B cell (primary cell): ENCODE measurements at regions of chr10 and their contacts with region 1.

Region 1: GRCh38 chr10:79938728-79939406 is 10.0 kb downstream of the SFTPD start:
- DNase-seq: peak; percentile 91
- ATAC-seq: peak; percentile 81
- H3K4me3 ChIP-seq: peak overlapping the region in 1 of 5 experiments; percentile 29
- H3K4me3 Mint-ChIP-seq: peak overlapping the region; percentile 80
- H3K27ac ChIP-seq: peak overlapping the region; percentile 78 to 88
- H3K27ac Mint-ChIP-seq: peak overlapping the region; percentile 97
- H3K4me1 ChIP-seq: peaks cover 42 to 45% of the 10 kb centered on the region in 2 donors
- H3K4me1 Mint-ChIP-seq: peaks cover 55% of the 10 kb centered on the region
- H3K27me3 ChIP-seq: no peaks in the 10 kb centered on the region
- H3K27me3 Mint-ChIP-seq: peaks cover 5% of the 10 kb centered on the region
- CTCF ChIP-seq: no peak

Region 2: GRCh38 chr10:79981450-79982361 is 42.8 kb after region 1 on chr10:
- CTCF ChIA-PET with region 1: no interaction called
- POLR2A ChIA-PET with region 1: no interaction called
- intact Hi-C with region 1: loop called (anchors 2 kb)
- DNase-seq: peak; percentile 40
- ATAC-seq: peak; percentile 62
- H3K4me3 ChIP-seq: peak overlapping the region in 4 of 5 experiments; percentile 32 to 59 (median 54)
- H3K4me3 Mint-ChIP-seq: peak overlapping the region; percentile 75
- H3K27ac ChIP-seq: no peak overlapping the region
- H3K27ac Mint-ChIP-seq: no peak overlapping the region
- H3K4me1 ChIP-seq: peaks cover 9 to 10% of the 10 kb centered on the region in 2 donors
- H3K4me1 Mint-ChIP-seq: peaks cover 13% of the 10 kb centered on the region
- H3K27me3 ChIP-seq: peaks cover 0 to 54% (median 8%) of the 10 kb centered on the region in 4 experiments
- H3K27me3 Mint-ChIP-seq: peaks cover 65% of the 10 kb centered on the region
- CTCF ChIP-seq: no peak

Region 3: DNA sequence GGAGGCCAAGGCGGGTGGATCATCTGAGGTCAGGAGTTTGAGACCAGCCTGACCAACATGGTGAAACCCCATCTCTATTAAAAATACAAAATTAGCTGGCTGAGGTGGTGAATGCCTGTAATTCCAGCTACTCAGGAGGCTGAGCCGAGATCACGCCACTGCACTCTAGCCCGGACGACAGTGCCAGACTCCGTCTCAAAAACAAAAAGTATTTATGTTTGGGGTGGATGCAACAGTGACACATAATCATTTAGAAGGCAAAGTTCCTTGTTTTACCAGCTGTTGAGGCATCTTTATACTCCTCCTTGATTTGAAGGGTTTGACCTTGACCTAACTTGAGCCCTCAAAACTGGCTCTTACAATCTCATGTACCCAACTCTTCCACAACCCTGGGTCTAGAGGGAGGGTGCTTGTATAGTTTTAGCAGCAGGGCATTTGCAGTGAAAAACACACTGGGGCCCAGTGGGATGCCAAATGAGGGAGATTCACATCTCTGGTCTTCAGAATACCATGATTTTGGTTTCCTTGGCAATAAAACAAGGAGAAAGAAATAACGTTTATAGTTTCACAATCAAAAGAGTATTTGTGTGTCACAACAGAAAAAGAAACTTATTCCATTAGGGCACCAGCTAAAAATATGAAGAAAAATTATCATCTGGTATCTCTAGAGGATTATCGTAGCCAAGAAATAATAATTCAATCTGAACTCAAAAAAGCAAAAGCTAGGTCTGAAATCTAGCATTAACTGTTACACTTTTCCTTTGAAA is 125.4 kb after region 1 on chr10:
- CTCF ChIA-PET with region 1: no interaction called
- POLR2A ChIA-PET with region 1: no interaction called
- intact Hi-C with region 1: no loop called
- DNase-seq: no peak
- ATAC-seq: no peak
- H3K4me3 ChIP-seq: no peak overlapping the region
- H3K4me3 Mint-ChIP-seq: no peak overlapping the region
- H3K27ac ChIP-seq: no peak overlapping the region
- H3K27ac Mint-ChIP-seq: no peak overlapping the region
- H3K4me1 ChIP-seq: no peaks in the 10 kb centered on the region
- H3K4me1 Mint-ChIP-seq: no peaks in the 10 kb centered on the region
- H3K27me3 ChIP-seq: peaks cover 0 to 3% (median 0%) of the 10 kb centered on the region in 4 experiments
- H3K27me3 Mint-ChIP-seq: peaks cover 4% of the 10 kb centered on the region
- CTCF ChIP-seq: no peak

Region 4: GRCh38 chr10:80078448-80079311 is 139.8 kb after region 1 on chr10 and contains the start of gene TMEM254:
- CTCF ChIA-PET with region 1: no interaction called
- POLR2A ChIA-PET with region 1: interaction called, 4 read pairs
- intact Hi-C with region 1: loop called (anchors 2 kb)
- DNase-seq: peak; percentile 92
- ATAC-seq: peak; percentile 86
- H3K4me3 ChIP-seq: peak within 1 kb of the TSS; percentile 74 to 98 (median 97)
- H3K4me3 Mint-ChIP-seq: peak within 1 kb of the TSS; percentile 97
- H3K27ac ChIP-seq: peak within 1 kb of the TSS; percentile 84 to 90
- H3K27ac Mint-ChIP-seq: peak within 1 kb of the TSS; percentile 92
- H3K4me1 ChIP-seq: peaks cover 11 to 15% of the 10 kb centered on the region in 2 donors
- H3K4me1 Mint-ChIP-seq: peaks cover 16% of the 10 kb centered on the region
- H3K27me3 ChIP-seq: no peaks in the 10 kb centered on the region
- H3K27me3 Mint-ChIP-seq: no peaks in the 10 kb centered on the region
- CTCF ChIP-seq: no peak
- total RNA-seq, gene TMEM254: 13.1 and 13.7 TPM in 2 replicates

Region 5: DNA sequence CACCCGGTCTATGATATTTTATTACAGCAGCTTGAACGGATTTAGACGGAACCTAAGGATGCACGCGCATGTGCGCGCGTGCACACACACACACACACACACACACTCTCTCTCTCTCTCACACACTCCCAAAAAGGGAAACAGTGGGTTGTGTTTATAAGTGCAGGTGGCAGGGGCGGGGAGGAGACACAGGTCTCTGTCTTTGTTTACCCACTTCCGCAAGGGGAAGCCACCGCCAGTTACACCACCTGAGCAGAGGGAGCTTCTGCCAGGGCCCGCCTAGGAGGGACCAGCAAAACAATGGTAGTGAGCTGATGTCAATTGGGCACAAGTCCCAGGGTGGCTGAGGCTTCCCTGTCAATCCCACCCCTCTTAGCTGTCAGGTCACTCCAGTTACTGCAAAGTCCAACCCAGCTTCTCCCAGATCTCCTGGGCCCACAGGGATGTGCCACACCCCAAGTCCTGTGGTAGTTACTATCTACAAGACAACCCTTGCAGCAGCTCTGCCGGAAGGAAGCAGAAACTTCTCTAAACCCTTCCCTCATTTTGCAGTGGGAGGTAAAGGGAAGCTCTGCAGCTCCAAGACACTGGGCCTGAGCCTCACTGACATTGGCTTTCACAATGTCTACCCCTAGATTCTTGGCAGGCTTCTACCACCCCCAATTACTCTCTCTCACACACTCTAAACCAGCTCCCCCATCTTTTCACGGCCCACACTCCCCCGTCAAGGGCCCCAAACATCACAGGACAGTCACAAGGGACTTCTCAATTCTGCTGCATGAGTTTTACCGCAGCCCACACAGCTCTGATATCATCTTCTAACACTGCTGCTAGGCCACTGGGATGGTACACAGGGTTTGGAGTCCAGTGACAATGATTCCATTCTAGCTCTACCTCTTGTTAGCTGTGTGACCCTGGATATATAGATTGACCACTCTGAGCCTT is 248.9 kb after region 1 on chr10:
- CTCF ChIA-PET with region 1: no interaction called
- POLR2A ChIA-PET with region 1: no interaction called
- intact Hi-C with region 1: loop called (anchors 5 kb)
- DNase-seq: peak; percentile 94
- ATAC-seq: peak; percentile 91
- H3K4me3 ChIP-seq: peak overlapping the region; percentile 20 to 63 (median 43)
- H3K4me3 Mint-ChIP-seq: peak overlapping the region; percentile 78
- H3K27ac ChIP-seq: peak overlapping the region; percentile 94 to 96
- H3K27ac Mint-ChIP-seq: peak overlapping the region; percentile 94
- H3K4me1 ChIP-seq: peaks cover 63% of the 10 kb centered on the region in 2 donors
- H3K4me1 Mint-ChIP-seq: peaks cover 79% of the 10 kb centered on the region
- H3K27me3 ChIP-seq: no peaks in the 10 kb centered on the region
- H3K27me3 Mint-ChIP-seq: no peaks in the 10 kb centered on the region
- CTCF ChIP-seq: no peak